GM10248 (cell line): ENCODE measurements at regions of chr6 and their contacts with region 1.

Region 1: DNA sequence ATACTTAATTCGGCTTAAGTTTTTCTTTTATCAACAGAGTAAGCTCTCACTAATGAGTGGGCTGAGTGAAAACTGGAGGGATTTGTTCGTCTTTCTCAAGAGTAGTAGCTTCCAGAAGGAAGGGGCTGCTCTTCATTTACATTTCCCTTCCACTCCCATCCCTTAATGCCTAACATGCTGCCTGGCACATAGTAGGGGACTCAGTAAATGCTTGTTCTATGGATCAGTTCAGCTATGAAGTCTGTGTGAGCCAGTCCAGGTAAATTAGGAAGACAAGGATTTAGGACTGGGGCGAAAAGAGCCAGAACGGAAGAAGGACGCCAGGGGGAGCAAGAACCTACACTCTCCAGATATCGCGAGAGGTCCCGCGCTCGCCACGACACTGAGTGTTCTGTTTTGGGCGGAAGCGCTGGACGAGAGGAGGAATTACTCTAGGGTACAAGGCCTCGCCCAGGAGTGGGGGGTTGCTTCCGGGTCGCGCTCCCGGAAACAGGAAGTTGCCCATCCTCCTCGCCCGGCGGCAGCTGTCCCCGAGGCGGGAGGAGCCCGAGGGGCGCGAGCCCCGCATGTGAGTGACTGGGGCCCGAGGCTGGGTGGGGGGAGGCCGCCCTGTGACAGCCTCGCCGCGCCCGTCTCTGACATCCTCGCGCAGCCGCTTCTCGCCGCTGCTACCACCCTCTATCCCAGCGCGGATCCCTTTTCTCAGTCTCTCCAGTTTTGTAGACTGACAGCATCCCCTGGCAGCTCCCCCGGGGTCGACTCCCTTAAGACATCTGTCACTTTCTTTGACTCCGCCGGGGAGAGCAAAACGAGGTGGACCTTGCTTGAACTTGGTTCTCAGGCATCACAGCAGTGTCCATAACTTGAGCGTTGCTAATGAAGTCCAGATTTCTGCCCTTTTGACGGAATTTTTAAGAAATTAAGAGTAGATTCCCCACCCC is at the start of gene C6orf89:
- DNase-seq: peak; percentile 94
- CTCF ChIP-seq: peak; percentile 68

Region 2: DNA sequence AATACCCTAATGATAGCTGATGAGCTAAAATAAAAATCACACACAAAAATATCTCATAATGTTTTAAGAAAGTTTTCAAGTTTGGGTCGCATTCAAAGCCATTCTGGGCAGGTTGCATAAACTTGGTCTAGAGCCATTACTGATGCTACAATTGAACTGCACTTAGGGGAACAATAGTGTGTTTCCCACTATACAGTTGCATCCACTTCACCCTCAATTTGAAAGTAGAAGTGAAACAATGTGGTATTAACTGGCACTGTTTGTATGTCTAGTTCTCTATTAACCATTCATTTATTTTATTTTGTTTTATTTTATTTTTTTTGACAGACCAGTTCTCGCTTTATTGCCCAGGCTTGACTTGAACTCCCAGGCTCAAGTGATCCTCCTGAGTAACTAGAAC is 315.5 kb before region 1 on chr6:
- CTCF ChIA-PET with region 1: no interaction called
- POLR2A ChIA-PET with region 1: no interaction called
- DNase-seq: no peak
- CTCF ChIP-seq: no peak

Region 3: GRCh38 chr6:36765594-36766398 is 119.9 kb before region 1 on chr6:
- CTCF ChIA-PET with region 1: interaction called, 11 read pairs
- POLR2A ChIA-PET with region 1: no interaction called
- DNase-seq: peak; percentile 90
- CTCF ChIP-seq: peak; percentile 98

Region 4: DNA sequence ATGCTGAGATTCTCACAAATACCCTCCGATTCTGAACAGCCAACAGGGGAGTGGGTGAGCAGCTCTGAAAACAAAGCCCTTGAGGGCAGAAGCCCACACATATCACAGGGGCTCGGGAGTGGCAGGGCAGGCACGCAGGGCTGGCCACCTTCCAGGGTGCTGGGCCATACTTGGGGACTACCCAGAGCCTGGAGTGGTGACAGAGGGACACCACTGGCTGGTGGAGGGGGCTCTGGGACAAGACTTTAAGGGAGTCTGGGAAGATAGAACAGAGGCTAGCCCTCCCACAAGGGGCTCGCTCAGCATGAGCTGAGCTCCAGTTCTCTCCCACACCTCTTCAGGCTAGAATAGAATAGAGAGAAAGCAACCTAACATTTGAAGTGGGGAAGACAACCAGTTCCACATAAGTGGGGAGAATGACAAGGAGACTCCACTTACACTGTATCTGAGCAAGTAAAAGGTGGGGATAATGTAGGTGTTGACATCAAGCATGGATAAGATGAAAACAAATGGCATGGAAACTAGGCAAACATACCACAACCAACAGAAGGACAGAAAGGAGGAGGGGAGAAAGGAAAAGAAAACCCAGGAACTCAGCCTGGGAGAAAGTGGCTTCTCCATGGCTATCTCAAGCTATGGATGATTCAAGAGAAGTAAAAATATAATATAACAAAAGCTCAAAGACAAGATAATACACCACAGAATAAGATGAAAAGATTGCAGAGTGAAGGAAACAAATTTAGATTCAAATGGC is 18.1 kb before region 1 on chr6:
- CTCF ChIA-PET with region 1: interaction called, 88 read pairs
- POLR2A ChIA-PET with region 1: no interaction called
- DNase-seq: no peak
- CTCF ChIP-seq: no peak

Region 5: GRCh38 chr6:36874443-36875249 is 11.1 kb before region 1 on chr6 and contains the start of gene PPIL1:
- CTCF ChIA-PET with region 1: interaction called, 88 read pairs
- POLR2A ChIA-PET with region 1: interaction called, 5 read pairs
- DNase-seq: peak; percentile 89
- CTCF ChIP-seq: no peak